K562 (cell line): ENCODE measurements at regions of chr12 and their contacts with region 1.

Region 1: GRCh38 chr12:100128512-100128908 is 14.2 kb downstream of the BLTP3B start:
- DNase-seq: peak in 2 of 4 experiments; percentile 31 to 49
- ATAC-seq: peak; percentile 91
- H3K4me3 ChIP-seq: no peak overlapping the region
- H3K27ac ChIP-seq: no peak overlapping the region
- H3K4me1 ChIP-seq: peaks cover 0 to 4% of the 10 kb centered on the region in 2 experiments; a peak in 2 of 5 replicates
- H3K27me3 ChIP-seq: no peaks in the 10 kb centered on the region
- CTCF ChIP-seq: peak; percentile 49 to 55 (median 54); a peak in 5 of 6 replicates
- EP300 ChIP-seq: no peak
- POLR2A ChIP-seq: no peak
- RAD21 ChIP-seq: peak; percentile 13 to 26; a peak in 3 of 4 replicates

Region 2: GRCh38 chr12:100077367-100077766 is 51.1 kb before region 1 on chr12:
- CTCF ChIA-PET with region 1: no interaction called
- POLR2A ChIA-PET with region 1: no interaction called
- in situ Hi-C with region 1: no loop called
- intact Hi-C with region 1: loop called (anchors 5 kb)
- DNase-seq: peak in 1 of 4 experiments; percentile 9
- ATAC-seq: peak; percentile 69; the same call in 2 of the 3 replicates
- H3K4me3 ChIP-seq: no peak overlapping the region
- H3K27ac ChIP-seq: no peak overlapping the region
- H3K4me1 ChIP-seq: no peaks in the 10 kb centered on the region
- H3K27me3 ChIP-seq: no peaks in the 10 kb centered on the region
- CTCF ChIP-seq: peak in 2 of 3 experiments; percentile 12 to 28; a peak in 2 of 6 replicates
- EP300 ChIP-seq: no peak
- POLR2A ChIP-seq: no peak
- RAD21 ChIP-seq: no peak